ENCODE measurements at regions of chr16 and their contacts with region 1.

Region 1: GRCh38 chr16:28211712-28212534 is at the start of gene XPO6:
- DNase-seq: peak; percentile 92 to 96 (median 95)
- H3K4me3 ChIP-seq: peak within 1 kb of the TSS; percentile 67 to 95 (median 84)
- H3K4me3 Mint-ChIP-seq: peak within 1 kb of the TSS; percentile 92 to 94
- H3K27ac ChIP-seq: peak within 1 kb of the TSS; percentile 66 to 94
- H3K27ac Mint-ChIP-seq: peak within 1 kb of the TSS; percentile 79 to 93 (median 88)
- H3K4me1 ChIP-seq: peaks cover 24 to 34% of the 10 kb centered on the region in 2 donors
- H3K4me1 Mint-ChIP-seq: peaks cover 32% of the 10 kb centered on the region
- H3K27me3 ChIP-seq: no peaks in the 10 kb centered on the region
- H3K27me3 Mint-ChIP-seq: no peaks in the 10 kb centered on the region
- CTCF ChIP-seq: no peak
- polyA plus RNA-seq, gene XPO6: 35.7 to 166 (median 38.3) TPM

Region 2: GRCh38 chr16:28110479-28110878 is 101.4 kb before region 1 on chr16:
- intact Hi-C with region 1: loop called in 1 of 2 experiments (anchors 2 kb)
- DNase-seq: peak; percentile 66 to 78 (median 72)
- H3K4me3 ChIP-seq: no peak overlapping the region
- H3K4me3 Mint-ChIP-seq: peak overlapping the region; percentile 6 to 23
- H3K27ac ChIP-seq: peak overlapping the region; percentile 56 to 82
- H3K27ac Mint-ChIP-seq: peak overlapping the region; percentile 80 to 98 (median 96)
- H3K4me1 ChIP-seq: peaks cover 33 to 37% of the 10 kb centered on the region in 2 donors
- H3K4me1 Mint-ChIP-seq: peaks cover 32% of the 10 kb centered on the region
- H3K27me3 ChIP-seq: no peaks in the 10 kb centered on the region
- H3K27me3 Mint-ChIP-seq: peaks cover 0 to 2% (median 0%) of the 10 kb centered on the region in 3 donors
- CTCF ChIP-seq: no peak

Region 3: DNA sequence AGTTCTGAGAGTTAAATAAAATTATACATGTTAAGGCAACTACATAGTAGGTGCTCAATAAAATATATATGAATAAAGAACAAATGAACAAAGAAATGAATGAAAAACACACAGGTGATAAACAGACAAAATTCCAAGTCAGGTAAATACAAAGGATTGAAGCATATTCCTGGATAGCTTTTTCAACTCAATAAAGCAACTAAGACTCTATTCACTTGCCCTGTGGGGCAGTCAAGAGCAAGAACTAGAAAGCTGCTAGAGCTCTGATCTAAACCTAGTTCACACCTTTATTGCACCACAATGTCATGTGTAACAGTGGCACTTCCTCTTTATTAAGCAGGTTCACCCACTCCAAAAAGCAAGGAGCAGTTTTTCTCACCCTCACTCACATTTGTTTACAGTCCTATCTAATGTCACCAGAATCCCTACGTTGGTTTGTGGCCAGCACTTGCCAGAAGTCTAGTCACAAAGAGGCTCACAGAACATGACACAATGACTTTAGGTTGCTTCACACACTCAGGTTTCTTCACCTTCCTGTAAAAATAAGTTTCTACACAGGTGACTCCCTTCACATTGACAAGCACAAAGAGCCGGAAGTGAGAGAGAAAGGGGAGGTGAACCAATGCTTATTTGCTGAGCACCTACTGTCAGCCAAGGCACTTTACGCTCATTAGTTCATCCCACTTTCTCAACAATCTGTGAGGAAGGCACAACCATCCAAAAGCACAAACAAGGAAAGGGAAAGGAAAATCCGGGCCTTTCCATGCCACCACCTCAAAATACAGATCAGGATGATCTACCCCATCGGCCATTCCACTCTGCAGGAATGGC is 70.9 kb before region 1 on chr16:
- intact Hi-C with region 1: loop called in 1 of 2 experiments (anchors 5 kb)
- DNase-seq: peak; percentile 72 to 81 (median 80)
- H3K4me3 ChIP-seq: no peak overlapping the region
- H3K4me3 Mint-ChIP-seq: peak overlapping the region; percentile 41 to 48
- H3K27ac ChIP-seq: peak overlapping the region; percentile 81 to 84
- H3K27ac Mint-ChIP-seq: peak overlapping the region; percentile 87 to 97 (median 94)
- H3K4me1 ChIP-seq: peaks cover 51 to 60% of the 10 kb centered on the region in 2 donors
- H3K4me1 Mint-ChIP-seq: peaks cover 58% of the 10 kb centered on the region
- H3K27me3 ChIP-seq: no peaks in the 10 kb centered on the region
- H3K27me3 Mint-ChIP-seq: no peaks in the 10 kb centered on the region
- CTCF ChIP-seq: no peak

Region 4: DNA sequence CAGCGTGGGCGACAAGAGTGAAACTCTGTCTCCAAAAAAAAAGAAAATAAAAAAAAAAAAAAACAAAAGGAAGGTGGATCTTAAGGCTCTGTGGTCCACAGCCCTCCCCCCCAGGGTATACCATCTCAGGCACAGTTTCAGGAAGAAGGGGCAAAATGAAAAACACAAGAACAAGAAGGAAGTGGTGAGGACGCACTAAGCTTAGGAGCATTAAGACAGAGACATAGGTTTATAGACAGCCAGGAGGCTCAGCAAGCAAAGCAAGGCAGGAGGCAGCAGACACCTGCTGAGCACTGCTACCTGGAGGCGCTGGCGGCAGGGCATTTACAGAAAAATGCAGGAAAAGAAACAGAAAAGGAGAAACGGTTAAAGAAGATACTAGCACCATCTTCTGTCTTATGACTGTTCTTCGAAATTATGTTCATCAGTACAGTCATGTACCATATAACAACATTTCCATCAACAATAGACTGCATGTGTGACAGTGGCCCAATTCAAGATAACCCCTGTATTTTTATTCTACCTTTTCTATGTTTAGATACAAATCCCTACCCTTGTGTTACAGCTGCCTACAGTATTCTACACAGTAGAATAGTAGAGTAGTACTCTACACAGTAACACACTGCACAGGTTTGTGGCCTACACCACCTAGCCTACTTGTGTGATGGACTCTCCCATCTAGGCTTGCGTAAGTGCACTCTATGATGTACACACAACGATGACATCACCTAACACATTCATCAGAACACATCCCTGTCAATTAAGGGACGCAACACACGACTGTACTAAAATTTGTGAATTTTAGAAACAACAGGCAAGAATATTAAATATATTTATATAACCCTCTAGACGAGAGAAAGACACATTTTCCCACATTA is 62.7 kb before region 1 on chr16:
- intact Hi-C with region 1: loop called (anchors 2 to 5 kb)
- DNase-seq: peak; percentile 50 to 60 (median 51)
- H3K4me3 ChIP-seq: no peak overlapping the region
- H3K4me3 Mint-ChIP-seq: no peak overlapping the region
- H3K27ac ChIP-seq: peak overlapping the region in 1 of 2 donors; percentile 59
- H3K27ac Mint-ChIP-seq: peak overlapping the region in 6 of 7 donors; percentile 25 to 92 (median 83)
- H3K4me1 ChIP-seq: peaks cover 24 to 45% of the 10 kb centered on the region in 2 donors
- H3K4me1 Mint-ChIP-seq: peaks cover 39% of the 10 kb centered on the region
- H3K27me3 ChIP-seq: no peaks in the 10 kb centered on the region
- H3K27me3 Mint-ChIP-seq: no peaks in the 10 kb centered on the region
- CTCF ChIP-seq: no peak

Region 5: GRCh38 chr16:28166394-28167208 is 45.3 kb before region 1 on chr16:
- intact Hi-C with region 1: no loop called
- DNase-seq: peak in 1 of 3 donors; percentile 46
- H3K4me3 ChIP-seq: no peak overlapping the region
- H3K4me3 Mint-ChIP-seq: no peak overlapping the region
- H3K27ac ChIP-seq: peak overlapping the region; percentile 62 to 89
- H3K27ac Mint-ChIP-seq: peak overlapping the region; percentile 81 to 96 (median 91)
- H3K4me1 ChIP-seq: peaks cover 51 to 57% of the 10 kb centered on the region in 2 donors
- H3K4me1 Mint-ChIP-seq: peaks cover 59% of the 10 kb centered on the region
- H3K27me3 ChIP-seq: no peaks in the 10 kb centered on the region
- H3K27me3 Mint-ChIP-seq: peaks cover 0 to 1% (median 0%) of the 10 kb centered on the region in 3 donors
- CTCF ChIP-seq: no peak